GM10248 (cell line): ENCODE measurements at regions of chr9 and their contacts with region 1.

Region 1: GRCh38 chr9:116928289-116928688 is 241.2 kb downstream of the TRIM32 start:
- DNase-seq: no peak
- CTCF ChIP-seq: no peak

Region 2: DNA sequence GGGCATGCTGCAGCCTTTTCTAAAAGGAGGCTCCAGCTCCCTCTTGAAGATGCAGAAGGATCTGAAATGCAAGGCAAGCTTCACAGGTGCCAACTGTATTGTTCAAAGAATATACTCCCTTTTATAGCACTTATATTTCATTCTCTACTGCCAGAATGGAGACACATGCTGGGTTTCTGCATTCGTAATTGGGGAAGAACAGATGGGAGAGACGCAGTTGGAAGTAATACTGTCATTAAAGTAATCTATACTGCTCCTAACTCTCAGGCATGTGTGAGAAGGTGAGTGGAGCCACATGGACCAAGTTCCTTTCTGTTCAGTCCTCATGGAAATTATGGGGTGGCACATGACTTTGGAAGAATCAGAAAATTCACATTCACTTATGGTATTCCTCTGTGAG is 14.8 kb before region 1 on chr9:
- CTCF ChIA-PET with region 1: interaction called, 23 read pairs
- POLR2A ChIA-PET with region 1: no interaction called
- DNase-seq: no peak
- CTCF ChIP-seq: no peak

Region 3: GRCh38 chr9:116939614-116940013 is 11.3 kb after region 1 on chr9:
- CTCF ChIA-PET with region 1: interaction called, 15 read pairs
- POLR2A ChIA-PET with region 1: interaction called, 3 read pairs
- DNase-seq: no peak
- CTCF ChIP-seq: no peak